Activated CD4-positive, alpha-beta memory T cell treated with anti-CD3 and anti-CD28 coated beads, Interleukin-2, amount 10 ng/mL, durations not matched to agents 7 days and 5 days (primary cell): ENCODE measurements at regions of chr17 and their contacts with region 1.

Region 1: GRCh38 chr17:76523084-76524037 is 14.1 kb downstream of the CYGB start:
- DNase-seq: peak; percentile 85
- H3K4me3 Mint-ChIP-seq: no peak overlapping the region
- H3K27ac Mint-ChIP-seq: no peak overlapping the region
- H3K4me1 Mint-ChIP-seq: peaks cover 17% of the 10 kb centered on the region
- H3K27me3 Mint-ChIP-seq: peaks cover 12% of the 10 kb centered on the region

Region 2: DNA sequence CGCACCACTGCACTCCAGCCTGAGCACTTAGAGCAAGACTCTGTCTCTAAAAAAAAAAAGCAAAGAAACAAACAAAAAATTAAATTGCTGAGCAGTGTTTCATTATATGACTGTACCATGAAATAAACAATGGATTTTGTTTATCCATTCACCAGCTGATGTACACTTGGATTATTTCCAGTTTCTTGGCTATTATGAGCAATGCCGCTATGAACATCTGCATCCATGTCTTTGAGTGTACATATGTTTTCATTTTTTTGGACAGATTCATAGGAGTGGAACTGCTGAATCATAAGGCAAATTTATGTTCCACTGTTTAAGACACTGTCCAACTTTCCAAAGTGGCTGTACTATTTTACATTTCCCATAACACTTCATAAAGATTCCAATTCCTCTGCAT is 291.0 kb before region 1 on chr17:
- CTCF ChIA-PET with region 1: no interaction called
- POLR2A ChIA-PET with region 1: no interaction called
- DNase-seq: no peak
- H3K4me3 Mint-ChIP-seq: no peak overlapping the region
- H3K27ac Mint-ChIP-seq: no peak overlapping the region
- H3K4me1 Mint-ChIP-seq: peaks cover 50% of the 10 kb centered on the region
- H3K27me3 Mint-ChIP-seq: no peaks in the 10 kb centered on the region

Region 3: GRCh38 chr17:76397687-76398487 is 125.5 kb before region 1 on chr17:
- CTCF ChIA-PET with region 1: no interaction called
- POLR2A ChIA-PET with region 1: no interaction called
- DNase-seq: peak; percentile 87
- H3K4me3 Mint-ChIP-seq: no peak overlapping the region
- H3K27ac Mint-ChIP-seq: no peak overlapping the region
- H3K4me1 Mint-ChIP-seq: no peaks in the 10 kb centered on the region
- H3K27me3 Mint-ChIP-seq: no peaks in the 10 kb centered on the region

Region 4: DNA sequence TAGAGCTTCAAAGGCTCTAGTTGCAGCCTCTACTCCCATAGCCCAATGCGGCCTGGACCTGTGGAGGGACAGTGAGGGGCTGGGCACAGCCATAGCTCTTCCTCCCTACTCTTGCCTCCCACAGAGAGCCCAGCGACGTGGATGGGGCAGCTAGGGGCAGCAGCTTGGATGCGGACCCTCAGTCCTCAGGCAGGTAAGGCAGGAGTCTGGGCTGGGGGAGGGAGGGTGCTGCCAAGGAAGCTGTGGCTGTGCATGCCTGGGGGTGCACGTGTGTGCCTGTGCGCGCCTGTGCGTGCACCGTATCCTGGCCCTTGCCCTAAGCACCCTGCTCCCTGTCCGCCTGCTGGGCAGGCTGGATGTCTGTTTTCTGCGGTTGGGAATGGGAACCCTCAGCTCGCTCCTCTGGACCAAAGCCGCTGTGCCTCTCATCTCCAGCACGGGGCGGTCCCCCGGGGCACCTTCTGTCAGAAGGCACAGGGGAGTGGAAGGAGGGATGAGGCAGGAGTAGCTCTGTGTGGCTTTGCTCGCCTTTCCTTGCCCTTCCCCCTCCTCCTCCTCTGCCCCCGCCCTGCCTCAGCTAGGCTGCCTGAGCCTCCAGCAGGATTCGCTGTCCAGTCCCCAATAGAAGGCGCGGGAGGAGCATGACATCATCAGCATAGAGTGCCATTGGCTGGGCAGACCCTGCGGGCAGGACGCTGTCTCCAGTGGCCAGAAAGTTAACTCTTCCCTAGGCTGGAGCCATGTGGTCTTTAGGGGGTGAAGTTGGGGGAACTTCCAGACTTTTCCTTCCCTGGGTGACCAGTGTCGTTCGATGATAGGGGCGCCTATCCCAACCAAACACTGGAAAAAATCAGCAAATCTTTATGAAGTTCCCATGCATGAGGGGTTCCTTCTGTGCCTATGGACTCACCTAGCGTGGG is 17.3 kb after region 1 on chr17:
- CTCF ChIA-PET with region 1: interaction called, 17 read pairs
- POLR2A ChIA-PET with region 1: interaction called, 3 read pairs
- DNase-seq: no peak
- H3K4me3 Mint-ChIP-seq: no peak overlapping the region
- H3K27ac Mint-ChIP-seq: no peak overlapping the region
- H3K4me1 Mint-ChIP-seq: peaks cover 3% of the 10 kb centered on the region
- H3K27me3 Mint-ChIP-seq: peaks cover 48% of the 10 kb centered on the region

Region 5: GRCh38 chr17:76547184-76547641 is 23.9 kb after region 1 on chr17:
- CTCF ChIA-PET with region 1: interaction called, 17 read pairs
- POLR2A ChIA-PET with region 1: interaction called, 3 read pairs
- DNase-seq: peak; percentile 54
- H3K4me3 Mint-ChIP-seq: no peak overlapping the region
- H3K27ac Mint-ChIP-seq: no peak overlapping the region
- H3K4me1 Mint-ChIP-seq: peaks cover 8% of the 10 kb centered on the region
- H3K27me3 Mint-ChIP-seq: peaks cover 10% of the 10 kb centered on the region

Region 6: DNA sequence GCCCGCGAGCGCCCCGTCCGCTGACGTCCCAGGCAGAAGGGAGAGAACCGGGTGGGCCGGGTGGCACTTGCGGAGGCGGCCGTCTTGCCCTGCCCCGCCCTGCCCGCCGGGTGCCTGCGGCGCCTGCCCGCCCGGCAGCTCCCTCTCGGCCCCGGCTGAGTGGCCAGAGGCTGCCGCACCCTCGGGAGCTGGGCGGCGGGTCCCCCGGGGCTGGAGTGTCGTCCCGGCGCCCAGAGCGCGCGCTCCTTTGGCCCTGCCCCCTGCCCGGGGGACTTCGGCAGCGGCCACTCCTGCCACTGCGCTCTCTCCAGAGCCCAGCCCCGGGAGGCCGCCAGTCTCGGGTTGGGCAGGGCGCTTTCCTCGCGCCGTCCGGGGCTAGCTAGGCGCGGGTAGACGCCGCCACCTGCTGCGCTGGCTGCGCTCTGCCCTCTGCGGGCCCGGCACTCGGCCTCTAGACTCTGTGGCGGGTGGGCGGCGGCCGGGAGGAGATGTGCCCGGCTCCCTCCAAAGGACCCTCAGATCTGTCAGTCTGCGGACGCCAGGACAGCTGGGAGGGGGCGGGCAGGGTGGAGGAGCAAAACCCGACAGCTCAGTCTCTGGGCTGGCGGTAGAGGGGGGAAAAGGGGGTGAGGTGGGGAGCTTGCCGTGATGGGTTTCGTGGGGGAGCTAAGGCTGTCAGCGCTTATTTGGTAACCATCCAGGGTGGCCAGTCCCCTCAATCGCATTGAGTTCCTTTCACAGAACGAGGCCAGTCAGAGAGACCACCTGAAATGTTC is 62.6 kb after region 1 on chr17 and contains the start of gene ST6GALNAC2:
- CTCF ChIA-PET with region 1: interaction called, 12 read pairs
- POLR2A ChIA-PET with region 1: no interaction called
- DNase-seq: peak; percentile 53
- H3K4me3 Mint-ChIP-seq: peak within 1 kb of the TSS; percentile 65
- H3K27ac Mint-ChIP-seq: no peak within 1 kb of the TSS
- H3K4me1 Mint-ChIP-seq: peaks cover 16% of the 10 kb centered on the region
- H3K27me3 Mint-ChIP-seq: peaks cover 58% of the 10 kb centered on the region
- total RNA-seq, gene ST6GALNAC2: 0.25 to 0.65 TPM

Region 7: DNA sequence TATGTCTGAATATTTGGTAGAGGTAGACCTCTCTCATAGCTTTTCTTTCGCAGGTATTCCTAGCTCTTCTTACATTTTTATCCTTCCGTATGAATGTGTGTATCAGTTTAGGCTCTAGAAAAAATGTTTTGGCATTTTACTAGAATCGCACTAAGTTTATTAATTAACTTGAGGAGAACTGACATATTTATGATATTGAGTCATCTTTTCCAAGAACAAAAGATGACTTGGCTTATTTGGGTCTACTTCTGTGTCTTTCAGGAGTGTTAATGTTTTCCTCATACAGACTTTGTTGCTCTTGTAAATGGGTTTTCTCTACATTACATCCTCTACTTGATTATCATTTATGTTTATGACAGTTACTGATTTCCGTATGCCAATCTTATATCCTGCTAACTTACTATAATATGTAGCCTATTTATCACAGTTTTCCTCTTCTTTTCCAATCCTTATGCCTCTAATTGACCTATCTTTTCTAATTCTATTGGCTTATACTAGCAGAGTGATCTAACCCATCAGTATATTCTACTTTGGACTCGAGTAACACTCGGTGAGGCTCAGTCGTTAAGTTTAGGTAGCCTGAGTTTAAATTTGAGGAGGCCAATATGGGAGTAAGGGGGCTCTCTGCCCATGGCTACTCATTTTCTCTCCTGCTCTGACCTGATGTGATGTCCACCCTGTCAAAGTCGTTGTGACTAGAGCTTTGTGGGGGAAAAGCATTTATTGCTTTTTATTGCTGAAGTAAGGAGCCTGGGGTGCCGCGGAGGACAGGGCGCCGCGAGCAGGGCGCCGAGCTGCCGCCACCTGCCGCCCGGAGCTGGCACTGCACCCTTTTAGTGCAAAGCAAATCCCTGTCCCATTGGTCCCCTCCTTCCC is 100.1 kb after region 1 on chr17:
- CTCF ChIA-PET with region 1: interaction called, 68 read pairs
- POLR2A ChIA-PET with region 1: interaction called, 4 read pairs
- DNase-seq: peak; percentile 79
- H3K4me3 Mint-ChIP-seq: no peak overlapping the region
- H3K27ac Mint-ChIP-seq: no peak overlapping the region
- H3K4me1 Mint-ChIP-seq: peaks cover 7% of the 10 kb centered on the region
- H3K27me3 Mint-ChIP-seq: peaks cover 15% of the 10 kb centered on the region

Region 8: GRCh38 chr17:76681222-76682137 is 158.1 kb after region 1 on chr17:
- CTCF ChIA-PET with region 1: interaction called, 42 read pairs
- POLR2A ChIA-PET with region 1: interaction called, 7 read pairs
- DNase-seq: peak; percentile 79
- H3K4me3 Mint-ChIP-seq: no peak overlapping the region
- H3K27ac Mint-ChIP-seq: no peak overlapping the region
- H3K4me1 Mint-ChIP-seq: peaks cover 8% of the 10 kb centered on the region
- H3K27me3 Mint-ChIP-seq: peaks cover 6% of the 10 kb centered on the region

Region 9: GRCh38 chr17:76714822-76715495 is 191.6 kb after region 1 on chr17:
- CTCF ChIA-PET with region 1: interaction called, 15 read pairs
- POLR2A ChIA-PET with region 1: no interaction called
- DNase-seq: peak; percentile 78
- H3K4me3 Mint-ChIP-seq: no peak overlapping the region
- H3K27ac Mint-ChIP-seq: peak overlapping the region; percentile 86
- H3K4me1 Mint-ChIP-seq: peaks cover 47% of the 10 kb centered on the region
- H3K27me3 Mint-ChIP-seq: no peaks in the 10 kb centered on the region

Region 10: GRCh38 chr17:76772842-76773525 is 249.6 kb after region 1 on chr17:
- CTCF ChIA-PET with region 1: no interaction called
- POLR2A ChIA-PET with region 1: no interaction called
- DNase-seq: peak; percentile 56
- H3K4me3 Mint-ChIP-seq: peak overlapping the region; percentile 78
- H3K27ac Mint-ChIP-seq: peak overlapping the region; percentile 90
- H3K4me1 Mint-ChIP-seq: peaks cover 30% of the 10 kb centered on the region
- H3K27me3 Mint-ChIP-seq: no peaks in the 10 kb centered on the region